ENCODE measurements at regions of chr2 and their contacts with region 1.

Region 1: DNA sequence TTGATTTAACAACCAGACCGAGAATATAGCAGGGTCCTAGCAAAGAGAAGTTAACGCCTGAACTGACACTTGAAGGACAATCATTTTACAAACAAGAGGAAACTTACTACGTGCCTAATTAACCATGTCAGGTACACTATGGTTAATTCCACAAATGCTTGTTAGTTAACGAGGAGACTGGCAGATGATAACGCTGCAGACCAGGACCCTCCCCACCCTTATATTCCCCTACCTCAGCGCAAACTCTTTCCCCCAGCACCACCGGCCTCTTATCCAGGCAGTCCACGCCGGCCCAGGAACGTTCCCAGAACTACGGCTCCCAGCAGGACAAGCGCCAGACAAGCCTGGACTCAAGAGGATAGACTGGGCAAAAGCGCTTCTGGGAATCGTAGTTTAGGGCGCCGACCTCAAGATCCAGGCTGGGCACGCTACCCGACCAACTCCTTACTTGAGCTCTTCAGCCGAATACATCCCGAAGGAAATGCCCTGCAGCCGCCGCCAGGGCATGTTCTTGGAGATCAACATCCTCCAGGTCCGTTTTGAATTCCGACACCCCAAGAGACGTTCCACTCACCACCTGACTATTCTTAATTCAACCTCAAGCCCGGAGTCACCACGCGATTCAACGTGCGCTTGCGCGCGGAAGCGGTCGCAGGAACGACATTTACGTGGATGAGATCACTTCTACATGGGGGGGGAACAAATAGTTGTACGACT is at the start of gene POLR1A:
- H3K4me3 ChIP-seq: peak within 1 kb of the TSS; percentile 92
- H3K27ac ChIP-seq: peak within 1 kb of the TSS; percentile 63
- H3K4me1 ChIP-seq: no peaks in the 10 kb centered on the region
- CTCF ChIP-seq: no peak

Region 2: DNA sequence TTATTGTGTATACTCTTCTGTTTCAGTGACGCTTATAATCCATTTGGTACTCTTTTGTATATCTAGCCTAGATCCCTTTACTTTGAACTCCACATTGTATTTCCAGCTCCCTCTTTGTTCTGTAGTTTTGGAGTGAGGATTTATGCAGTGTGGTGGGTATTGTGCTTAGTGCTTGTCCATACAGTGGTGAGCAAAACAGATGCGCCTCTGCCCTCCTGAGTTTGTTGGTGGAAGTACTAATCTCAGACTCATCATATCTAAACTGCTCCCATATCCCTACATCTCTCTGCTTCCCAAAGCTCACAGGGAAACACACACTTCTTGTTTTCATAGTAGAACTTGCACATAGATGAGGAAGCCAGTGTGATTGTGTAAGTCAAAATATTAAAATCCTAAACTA is 12.7 kb after region 1 on chr2:
- CTCF ChIA-PET with region 1: no interaction called
- POLR2A ChIA-PET with region 1: interaction called, 12 read pairs
- H3K4me3 ChIP-seq: no peak overlapping the region
- H3K27ac ChIP-seq: no peak overlapping the region
- H3K4me1 ChIP-seq: no peaks in the 10 kb centered on the region
- CTCF ChIP-seq: no peak